ENCODE measurements at regions of chr1 and their contacts with region 1.

Region 1: DNA sequence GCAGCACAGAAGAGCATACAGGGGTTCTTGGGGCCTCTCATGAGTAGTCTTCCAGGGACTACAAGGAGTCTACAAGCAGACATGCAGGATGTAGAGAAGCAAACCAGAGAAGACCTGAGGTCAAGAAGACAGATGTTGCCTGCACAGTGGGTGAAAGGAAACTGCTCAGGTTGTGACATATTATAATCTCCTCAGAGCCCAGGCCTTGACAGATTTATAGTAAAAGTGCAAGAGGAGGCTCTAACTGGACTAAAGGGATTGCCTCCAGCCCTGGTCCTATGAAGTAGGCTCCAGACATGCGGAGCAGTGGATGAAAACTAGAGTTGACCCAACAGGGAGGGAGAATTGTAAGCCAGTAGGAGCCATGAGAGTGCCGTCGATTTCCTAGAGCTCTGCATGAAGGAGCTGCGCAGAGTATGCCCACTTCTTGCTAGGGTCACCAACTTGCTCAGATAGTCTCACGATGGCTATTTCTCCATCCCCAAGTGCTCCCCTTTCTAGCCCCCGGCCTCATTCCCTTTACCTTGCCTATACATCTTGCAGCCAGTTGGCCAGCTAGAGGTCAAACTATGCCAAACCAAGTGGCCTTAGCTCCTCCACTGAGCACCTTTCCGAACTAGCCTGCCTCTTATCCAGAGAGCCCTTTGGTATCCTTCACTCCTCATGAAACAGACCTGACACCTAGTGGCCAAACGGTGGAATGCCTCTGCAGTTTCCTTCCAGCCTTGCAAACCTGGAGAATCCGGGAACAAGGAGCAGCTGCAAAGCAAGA is 36.2 kb upstream of the IPO9 start:
- DNase-seq: peak; percentile 73 to 79
- H3K4me3 ChIP-seq: no peak overlapping the region
- H3K4me3 Mint-ChIP-seq: no peak overlapping the region
- H3K27ac Mint-ChIP-seq: no peak overlapping the region
- H3K4me1 ChIP-seq: no peaks in the 10 kb centered on the region
- H3K4me1 Mint-ChIP-seq: no peaks in the 10 kb centered on the region
- H3K27me3 ChIP-seq: no peaks in the 10 kb centered on the region
- H3K27me3 Mint-ChIP-seq: peaks cover 3% of the 10 kb centered on the region
- CTCF ChIP-seq: peak; percentile 85 to 97

Region 2: DNA sequence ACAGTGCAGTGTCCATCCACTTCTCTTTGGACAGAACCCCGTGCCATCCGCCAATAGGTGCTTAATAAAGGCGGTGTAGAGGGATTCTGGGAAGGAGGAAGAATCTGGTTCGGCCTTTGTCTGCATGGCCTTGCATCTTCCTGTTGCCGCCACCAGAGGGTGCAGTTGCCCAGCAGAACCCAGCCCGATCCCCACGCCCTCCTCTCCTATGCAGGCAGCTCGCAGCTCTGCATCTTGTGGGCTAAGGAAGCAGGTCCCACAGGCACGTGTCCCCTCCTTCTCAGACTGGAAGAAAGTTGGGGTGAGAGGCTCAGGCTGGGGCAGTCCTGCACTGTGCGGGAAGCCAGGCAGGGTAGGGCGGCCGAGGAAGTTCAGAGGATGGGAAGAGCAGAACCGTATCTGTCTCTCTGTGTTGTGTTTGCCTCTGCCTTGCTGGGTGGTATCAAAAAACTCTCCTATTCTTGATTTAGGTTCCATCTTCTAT is 233.0 kb before region 1 on chr1:
- CTCF ChIA-PET with region 1: interaction called, 25 read pairs
- POLR2A ChIA-PET with region 1: no interaction called
- intact Hi-C with region 1: loop called (anchors 1 kb)
- DNase-seq: peak; percentile 73 to 82
- H3K4me3 ChIP-seq: no peak overlapping the region
- H3K4me3 Mint-ChIP-seq: no peak overlapping the region
- H3K27ac Mint-ChIP-seq: no peak overlapping the region
- H3K4me1 ChIP-seq: no peaks in the 10 kb centered on the region
- H3K4me1 Mint-ChIP-seq: no peaks in the 10 kb centered on the region
- H3K27me3 ChIP-seq: peaks cover 1% of the 10 kb centered on the region
- H3K27me3 Mint-ChIP-seq: peaks cover 10% of the 10 kb centered on the region
- CTCF ChIP-seq: peak; percentile 88 to 95

Region 3: GRCh38 chr1:201703621-201704439 is 88.9 kb before region 1 on chr1:
- CTCF ChIA-PET with region 1: interaction called, 178 read pairs
- POLR2A ChIA-PET with region 1: no interaction called
- intact Hi-C with region 1: loop called (anchors 1 kb)
- DNase-seq: peak; percentile 77 to 87
- H3K4me3 ChIP-seq: no peak overlapping the region
- H3K4me3 Mint-ChIP-seq: no peak overlapping the region
- H3K27ac Mint-ChIP-seq: no peak overlapping the region
- H3K4me1 ChIP-seq: no peaks in the 10 kb centered on the region
- H3K4me1 Mint-ChIP-seq: no peaks in the 10 kb centered on the region
- H3K27me3 ChIP-seq: no peaks in the 10 kb centered on the region
- H3K27me3 Mint-ChIP-seq: peaks cover 3% of the 10 kb centered on the region
- CTCF ChIP-seq: peak; percentile 93

Region 4: DNA sequence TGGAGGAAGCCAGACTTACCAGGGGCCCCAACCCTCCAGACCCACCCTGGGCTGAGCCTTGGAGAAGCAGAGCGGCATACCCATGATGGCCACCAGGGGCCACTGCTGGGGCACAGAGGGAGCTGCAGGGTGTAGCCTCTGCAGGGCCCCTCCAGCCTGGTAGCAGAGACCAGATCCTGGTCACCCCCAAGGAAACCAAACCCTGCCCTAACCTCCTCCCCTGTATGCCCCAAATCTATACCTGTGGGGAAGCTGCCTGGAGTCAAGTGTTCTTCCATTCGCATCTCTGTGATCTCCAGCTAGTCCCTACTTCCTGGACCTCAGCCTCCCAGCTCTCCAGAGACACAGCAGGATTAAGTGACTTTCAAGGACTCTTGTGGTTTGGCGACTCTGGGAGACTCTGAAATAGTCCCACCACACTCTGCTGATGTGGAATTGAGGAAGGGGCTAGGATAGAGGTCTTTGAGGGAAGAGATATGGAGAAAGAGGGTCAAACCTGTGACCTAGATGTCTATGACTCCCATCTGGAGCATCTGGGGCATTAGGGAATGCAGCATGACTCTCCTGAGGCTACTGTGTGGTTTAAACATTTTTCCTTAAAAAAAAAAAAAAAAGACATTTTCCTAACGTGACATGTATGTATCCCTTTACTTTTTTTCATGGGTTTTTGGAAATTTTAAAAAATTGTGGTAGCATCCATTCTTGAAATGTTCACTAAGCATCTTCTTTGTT is 83.0 kb before region 1 on chr1:
- CTCF ChIA-PET with region 1: interaction called, 178 read pairs
- POLR2A ChIA-PET with region 1: interaction called, 3 read pairs
- intact Hi-C with region 1: loop called (anchors 1 kb)
- DNase-seq: peak; percentile 64 to 80
- H3K4me3 ChIP-seq: no peak overlapping the region
- H3K4me3 Mint-ChIP-seq: no peak overlapping the region
- H3K27ac Mint-ChIP-seq: no peak overlapping the region
- H3K4me1 ChIP-seq: 0 out of 2 replicates have a peak, but pooled peaks cover 8% of the 10 kb centered on the region
- H3K4me1 Mint-ChIP-seq: no peaks in the 10 kb centered on the region
- H3K27me3 ChIP-seq: no peaks in the 10 kb centered on the region
- H3K27me3 Mint-ChIP-seq: no peaks in the 10 kb centered on the region
- CTCF ChIP-seq: peak; percentile 94 to 95

Region 5: DNA sequence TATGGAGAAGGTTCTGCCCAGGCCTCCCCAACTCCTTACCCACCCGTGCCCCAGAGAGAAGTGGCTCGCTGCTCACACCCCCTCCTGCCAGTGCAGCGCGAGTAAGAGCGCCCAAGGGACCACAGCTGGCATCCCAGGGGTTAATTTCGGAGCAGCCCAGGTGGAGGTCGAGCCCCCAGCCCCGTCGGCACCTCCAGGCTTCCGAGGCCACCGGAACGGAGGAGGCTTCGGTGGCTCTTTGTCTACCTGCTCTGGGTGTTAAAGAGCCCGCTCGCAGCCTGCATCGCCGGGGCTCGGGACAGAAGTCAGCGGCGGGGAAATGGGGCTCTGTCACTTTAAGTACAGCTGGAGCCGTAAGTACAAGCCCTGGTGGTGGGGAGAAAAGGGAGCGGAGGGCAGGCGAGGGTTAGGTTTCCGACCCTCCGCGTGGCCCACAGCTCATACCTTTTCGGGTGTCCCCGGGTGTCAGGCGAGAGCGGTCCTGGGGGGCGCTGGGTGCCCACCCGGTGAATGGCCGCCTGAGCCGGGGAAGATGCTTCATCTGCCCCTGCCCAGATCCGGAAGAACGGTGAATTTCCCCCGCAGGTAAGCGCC is 53.1 kb before region 1 on chr1:
- CTCF ChIA-PET with region 1: interaction called, 12 read pairs
- POLR2A ChIA-PET with region 1: no interaction called
- intact Hi-C with region 1: no loop called
- DNase-seq: peak; percentile 67 to 70
- H3K4me3 ChIP-seq: peak overlapping the region; percentile 76
- H3K4me3 Mint-ChIP-seq: peak overlapping the region; percentile 65
- H3K27ac Mint-ChIP-seq: no peak overlapping the region
- H3K4me1 ChIP-seq: 0 out of 2 replicates have a peak, but pooled peaks cover 4% of the 10 kb centered on the region
- H3K4me1 Mint-ChIP-seq: no peaks in the 10 kb centered on the region
- H3K27me3 ChIP-seq: no peaks in the 10 kb centered on the region; the same call in 1 of the 2 replicates
- H3K27me3 Mint-ChIP-seq: peaks cover 8% of the 10 kb centered on the region
- CTCF ChIP-seq: no peak

Measured in Caco-2 (cell line).